A673 (cell line): ENCODE measurements at regions of chr11 and their contacts with region 1.

Region 1: GRCh38 chr11:33039274-33040032 is at the start of gene TCP11L1:
- DNase-seq: peak; percentile 89
- H3K4me3 ChIP-seq: peak within 1 kb of the TSS; percentile 63
- H3K27ac ChIP-seq: peak within 1 kb of the TSS; percentile 94
- H3K4me1 ChIP-seq: peaks cover 32% of the 10 kb centered on the region
- H3K27me3 ChIP-seq: no peaks in the 10 kb centered on the region
- CTCF ChIP-seq: no peak
- total RNA-seq, gene TCP11L1: 43.7 and 44.5 TPM in 2 replicates

Region 2: GRCh38 chr11:32333320-32333991 is 706.0 kb before region 1 on chr11:
- CTCF ChIA-PET with region 1: no interaction called
- POLR2A ChIA-PET with region 1: no interaction called
- intact Hi-C with region 1: no loop called
- DNase-seq: peak; percentile 82
- H3K4me3 ChIP-seq: peak overlapping the region; percentile 4
- H3K27ac ChIP-seq: no peak overlapping the region
- H3K4me1 ChIP-seq: peaks cover 12% of the 10 kb centered on the region
- H3K27me3 ChIP-seq: no peaks in the 10 kb centered on the region
- CTCF ChIP-seq: peak; percentile 67

Region 3: DNA sequence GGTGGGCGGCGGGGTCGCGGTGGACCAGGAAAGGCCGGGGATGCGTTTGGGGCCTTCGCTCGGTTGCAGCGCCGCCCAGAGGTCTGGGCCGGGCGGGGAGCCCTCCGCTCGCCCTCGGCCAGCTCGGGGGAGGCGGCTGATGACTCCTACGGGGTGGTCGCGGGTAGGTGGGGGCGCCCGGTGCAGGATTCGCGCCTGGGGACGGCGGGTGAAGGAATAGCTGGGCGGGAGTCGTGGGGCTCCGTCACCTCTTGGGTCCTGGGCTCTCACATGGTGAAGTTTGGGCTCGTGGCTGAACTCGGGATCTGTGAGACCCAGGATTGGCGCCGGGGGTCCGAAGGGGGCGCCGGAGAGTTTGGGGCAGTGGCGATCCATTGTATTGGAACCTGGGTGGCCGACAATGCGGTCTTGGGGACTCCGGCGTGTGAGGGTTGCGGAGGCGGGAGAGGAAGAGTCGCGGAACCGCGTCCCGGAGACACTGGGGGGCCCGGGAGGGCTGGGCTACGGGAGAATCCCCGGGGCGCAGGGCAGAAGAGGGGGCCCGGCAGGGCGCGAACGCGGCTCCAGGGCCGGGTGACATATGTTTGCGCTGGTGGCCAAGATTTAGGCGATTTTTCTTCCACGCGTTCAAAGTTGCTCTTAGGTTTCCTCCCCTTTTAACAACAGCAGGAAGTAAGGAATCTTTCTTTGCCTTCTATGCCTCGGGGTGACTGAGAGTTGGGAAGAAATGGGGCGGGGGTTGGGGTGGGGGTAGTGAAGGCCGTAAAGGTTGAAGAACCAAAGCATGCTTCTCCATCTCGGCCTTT is 145.9 kb before region 1 on chr11:
- CTCF ChIA-PET with region 1: no interaction called
- POLR2A ChIA-PET with region 1: no interaction called
- intact Hi-C with region 1: loop called (anchors 5 kb)
- DNase-seq: peak; percentile 86
- H3K4me3 ChIP-seq: peak overlapping the region; percentile 77
- H3K27ac ChIP-seq: peak overlapping the region; percentile 85
- H3K4me1 ChIP-seq: peaks cover 32% of the 10 kb centered on the region
- H3K27me3 ChIP-seq: no peaks in the 10 kb centered on the region
- CTCF ChIP-seq: peak; percentile 81

Region 4: DNA sequence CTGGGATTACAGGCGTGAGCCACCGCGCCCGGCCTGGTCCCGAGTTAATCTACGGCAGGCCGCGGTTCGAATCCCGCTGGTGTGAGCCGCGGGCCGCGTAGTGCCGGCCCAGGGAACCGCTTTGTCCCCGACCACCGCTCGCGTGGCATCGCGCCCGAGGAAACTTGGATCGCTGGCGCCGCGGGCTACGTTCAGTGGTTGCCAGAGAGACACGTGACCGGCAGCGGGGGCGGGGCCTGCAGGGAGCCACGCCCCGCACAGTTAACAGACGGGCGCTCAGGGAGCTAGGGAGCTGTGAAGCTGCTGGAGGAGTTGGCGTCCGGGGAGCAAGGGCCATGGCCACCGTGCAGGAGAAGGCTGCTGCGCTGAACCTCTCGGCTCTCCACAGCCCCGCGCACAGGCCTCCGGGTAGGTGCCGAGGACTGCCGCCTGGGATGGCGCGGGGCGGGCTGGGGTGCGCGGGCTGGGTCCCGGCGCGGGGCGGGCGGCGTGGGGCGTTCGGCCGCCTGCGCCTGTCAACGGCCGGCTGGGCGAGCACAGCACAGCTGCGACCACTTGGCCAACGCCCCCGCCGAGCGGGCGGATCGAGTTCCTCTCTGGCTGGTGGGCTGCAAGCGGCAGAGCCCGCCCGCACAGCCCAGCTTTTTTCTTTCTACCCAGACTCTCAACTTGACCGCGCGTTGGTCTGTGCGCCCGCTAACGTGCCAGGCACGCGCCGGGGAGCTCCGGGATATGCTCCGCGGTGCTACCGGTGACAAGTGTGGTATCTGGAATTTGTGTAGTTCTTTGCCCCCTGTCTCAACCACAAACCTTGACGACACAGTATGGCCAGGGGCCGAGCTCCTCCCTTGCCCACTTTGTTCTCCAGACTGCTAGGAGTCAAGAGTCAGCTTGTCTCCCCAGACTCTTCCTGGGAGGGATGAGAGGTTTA is 23.6 kb before region 1 on chr11 and contains the start of gene DEPDC7:
- CTCF ChIA-PET with region 1: no interaction called
- POLR2A ChIA-PET with region 1: no interaction called
- intact Hi-C with region 1: loop called (anchors 2 kb)
- DNase-seq: peak; percentile 100
- H3K4me3 ChIP-seq: peak within 1 kb of the TSS; percentile 60
- H3K27ac ChIP-seq: peak within 1 kb of the TSS; percentile 31
- H3K4me1 ChIP-seq: peaks cover 12% of the 10 kb centered on the region
- H3K27me3 ChIP-seq: no peaks in the 10 kb centered on the region
- CTCF ChIP-seq: no peak
- total RNA-seq, gene DEPDC7: 11.4 and 12.4 TPM in 2 replicates

Region 5: GRCh38 chr11:33059331-33060007 is 20.0 kb after region 1 on chr11:
- CTCF ChIA-PET with region 1: interaction called, 3 read pairs
- POLR2A ChIA-PET with region 1: no interaction called
- intact Hi-C with region 1: loop called (anchors 1 kb)
- DNase-seq: peak; percentile 95
- H3K4me3 ChIP-seq: no peak overlapping the region
- H3K27ac ChIP-seq: peak overlapping the region; percentile 39
- H3K4me1 ChIP-seq: peaks cover 79% of the 10 kb centered on the region
- H3K27me3 ChIP-seq: no peaks in the 10 kb centered on the region
- CTCF ChIP-seq: no peak

Region 6: DNA sequence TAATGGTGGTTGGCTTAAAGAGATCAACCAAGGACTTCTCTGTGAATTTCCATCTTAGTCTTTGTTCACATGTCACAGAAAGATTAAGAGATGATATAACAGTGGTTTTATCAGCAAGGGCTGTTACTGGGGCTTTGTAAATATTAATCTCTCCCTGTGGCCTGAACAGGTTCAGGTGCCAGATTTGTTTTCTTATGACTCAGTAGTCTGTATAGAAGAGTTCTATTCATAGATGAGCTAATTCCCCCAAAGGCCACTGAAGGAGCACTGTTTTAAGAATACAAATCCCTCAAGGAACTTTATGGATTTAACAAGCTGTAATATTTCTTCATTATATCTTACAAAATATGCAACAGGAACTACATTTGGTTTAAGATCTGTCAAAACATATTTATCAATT is 50.3 kb after region 1 on chr11:
- CTCF ChIA-PET with region 1: no interaction called
- POLR2A ChIA-PET with region 1: no interaction called
- intact Hi-C with region 1: no loop called
- DNase-seq: no peak
- H3K4me3 ChIP-seq: no peak overlapping the region
- H3K27ac ChIP-seq: no peak overlapping the region
- H3K4me1 ChIP-seq: peaks cover 12% of the 10 kb centered on the region
- H3K27me3 ChIP-seq: no peaks in the 10 kb centered on the region
- CTCF ChIP-seq: no peak